H1 (cell line): ENCODE measurements at regions of chrX and their contacts with region 1.

Region 1: GRCh38 chrX:16882702-16883486 is 12.7 kb upstream of the RBBP7 start:
- DNase-seq: peak in 1 of 2 experiments; percentile 66
- H3K4me3 ChIP-seq: peak overlapping the region; percentile 32 to 75 (median 43); a peak in 7 of 8 replicates
- H3K27ac ChIP-seq: no peak overlapping the region
- H3K4me1 ChIP-seq: no peaks in the 10 kb centered on the region
- H3K27me3 ChIP-seq: no peaks in the 10 kb centered on the region
- CTCF ChIP-seq: peak; percentile 31 to 62 (median 54)
- EP300 ChIP-seq: no peak
- POLR2A ChIP-seq: no peak; a peak in 1 of 3 replicates
- RAD21 ChIP-seq: peak; percentile 57 to 67

Region 2: DNA sequence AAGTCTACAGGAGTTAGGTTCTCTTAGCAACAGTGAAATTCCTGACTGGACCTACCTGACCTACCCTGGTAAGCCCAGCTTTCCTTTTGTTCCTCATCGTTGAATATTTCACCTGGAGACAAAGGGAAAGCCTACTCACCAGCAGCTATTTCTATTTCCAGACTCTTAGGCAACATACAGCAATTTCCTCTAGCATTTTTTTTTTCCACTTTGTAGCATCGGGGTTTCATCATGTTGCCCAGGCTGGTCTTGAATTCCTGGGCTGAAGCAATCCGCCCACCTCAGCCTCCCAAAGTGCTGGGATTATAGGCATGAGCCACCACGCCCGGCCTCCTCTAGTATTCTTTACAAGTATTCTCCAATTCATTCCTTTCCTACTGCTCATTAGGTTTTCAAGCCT is 239.7 kb before region 1 on chrX:
- CTCF ChIA-PET with region 1: no interaction called
- POLR2A ChIA-PET with region 1: no interaction called
- DNase-seq: no peak
- H3K4me3 ChIP-seq: no peak overlapping the region
- H3K27ac ChIP-seq: no peak overlapping the region
- H3K4me1 ChIP-seq: 0 out of 7 replicates have a peak, but pooled peaks cover 0 to 3% (median 0%) of the 10 kb centered on the region in 4 experiments
- H3K27me3 ChIP-seq: no peaks in the 10 kb centered on the region
- CTCF ChIP-seq: no peak
- EP300 ChIP-seq: no peak
- POLR2A ChIP-seq: no peak
- RAD21 ChIP-seq: no peak

Region 3: GRCh38 chrX:16870095-16870860 is 12.6 kb before region 1 on chrX and contains the start of gene RBBP7:
- CTCF ChIA-PET with region 1: interaction called, 33 read pairs
- POLR2A ChIA-PET with region 1: interaction called, 11 read pairs
- DNase-seq: peak in 1 of 2 experiments; percentile 90
- H3K4me3 ChIP-seq: peak within 1 kb of the TSS; percentile 61 to 92 (median 80)
- H3K27ac ChIP-seq: peak within 1 kb of the TSS; percentile 96
- H3K4me1 ChIP-seq: peaks cover 0 to 8% (median 0%) of the 10 kb centered on the region in 4 experiments; a peak in 3 of 7 replicates
- H3K27me3 ChIP-seq: no peaks in the 10 kb centered on the region
- CTCF ChIP-seq: no peak
- EP300 ChIP-seq: no peak
- POLR2A ChIP-seq: peak; percentile 69 to 75
- RAD21 ChIP-seq: no peak
- total RNA-seq, gene RBBP7: 124 and 138 TPM in 2 replicates

Region 4: GRCh38 chrX:16920075-16920474 is 37.2 kb after region 1 on chrX:
- CTCF ChIA-PET with region 1: no interaction called
- POLR2A ChIA-PET with region 1: no interaction called
- DNase-seq: no peak
- H3K4me3 ChIP-seq: no peak overlapping the region
- H3K27ac ChIP-seq: no peak overlapping the region
- H3K4me1 ChIP-seq: 0 out of 7 replicates have a peak, but pooled peaks cover 0 to 3% (median 0%) of the 10 kb centered on the region in 4 experiments
- H3K27me3 ChIP-seq: no peaks in the 10 kb centered on the region
- CTCF ChIP-seq: no peak
- EP300 ChIP-seq: no peak
- POLR2A ChIP-seq: no peak
- RAD21 ChIP-seq: no peak

Region 5: GRCh38 chrX:17038681-17039161 is 155.8 kb after region 1 on chrX:
- CTCF ChIA-PET with region 1: interaction called, 78 read pairs
- POLR2A ChIA-PET with region 1: no interaction called
- DNase-seq: no peak
- H3K4me3 ChIP-seq: no peak overlapping the region
- H3K27ac ChIP-seq: no peak overlapping the region
- H3K4me1 ChIP-seq: no peaks in the 10 kb centered on the region
- H3K27me3 ChIP-seq: no peaks in the 10 kb centered on the region
- CTCF ChIP-seq: no peak
- EP300 ChIP-seq: no peak
- POLR2A ChIP-seq: no peak
- RAD21 ChIP-seq: no peak

Region 6: DNA sequence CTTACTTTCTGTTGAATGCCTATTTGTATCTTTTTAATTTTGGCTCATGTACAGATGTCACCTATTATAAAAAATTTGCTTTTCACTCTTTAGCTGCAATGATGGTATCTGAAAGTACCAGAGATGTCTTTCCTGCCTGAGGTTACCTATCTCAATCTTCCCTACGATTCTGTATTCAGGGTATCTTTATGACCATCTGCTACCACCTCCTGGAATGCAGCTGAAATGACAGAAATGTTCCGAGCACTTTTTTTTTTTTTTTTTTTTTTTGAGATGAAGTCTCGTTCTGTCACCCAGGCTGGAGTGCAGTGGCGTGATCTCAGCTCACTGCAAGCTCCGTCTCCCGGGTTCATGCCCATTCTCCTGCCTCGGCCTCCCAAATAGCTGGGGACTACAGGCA is 199.9 kb after region 1 on chrX:
- CTCF ChIA-PET with region 1: interaction called, 24 read pairs
- POLR2A ChIA-PET with region 1: no interaction called
- DNase-seq: no peak
- H3K4me3 ChIP-seq: no peak overlapping the region
- H3K27ac ChIP-seq: no peak overlapping the region
- H3K4me1 ChIP-seq: no peaks in the 10 kb centered on the region
- H3K27me3 ChIP-seq: no peaks in the 10 kb centered on the region
- CTCF ChIP-seq: peak in 2 of 3 experiments; percentile 7 to 16; a peak in 2 of 4 replicates
- EP300 ChIP-seq: no peak
- POLR2A ChIP-seq: no peak
- RAD21 ChIP-seq: peak; percentile 48 to 52